ENCODE measurements at regions of chr20 and their contacts with region 1.

Region 1: DNA sequence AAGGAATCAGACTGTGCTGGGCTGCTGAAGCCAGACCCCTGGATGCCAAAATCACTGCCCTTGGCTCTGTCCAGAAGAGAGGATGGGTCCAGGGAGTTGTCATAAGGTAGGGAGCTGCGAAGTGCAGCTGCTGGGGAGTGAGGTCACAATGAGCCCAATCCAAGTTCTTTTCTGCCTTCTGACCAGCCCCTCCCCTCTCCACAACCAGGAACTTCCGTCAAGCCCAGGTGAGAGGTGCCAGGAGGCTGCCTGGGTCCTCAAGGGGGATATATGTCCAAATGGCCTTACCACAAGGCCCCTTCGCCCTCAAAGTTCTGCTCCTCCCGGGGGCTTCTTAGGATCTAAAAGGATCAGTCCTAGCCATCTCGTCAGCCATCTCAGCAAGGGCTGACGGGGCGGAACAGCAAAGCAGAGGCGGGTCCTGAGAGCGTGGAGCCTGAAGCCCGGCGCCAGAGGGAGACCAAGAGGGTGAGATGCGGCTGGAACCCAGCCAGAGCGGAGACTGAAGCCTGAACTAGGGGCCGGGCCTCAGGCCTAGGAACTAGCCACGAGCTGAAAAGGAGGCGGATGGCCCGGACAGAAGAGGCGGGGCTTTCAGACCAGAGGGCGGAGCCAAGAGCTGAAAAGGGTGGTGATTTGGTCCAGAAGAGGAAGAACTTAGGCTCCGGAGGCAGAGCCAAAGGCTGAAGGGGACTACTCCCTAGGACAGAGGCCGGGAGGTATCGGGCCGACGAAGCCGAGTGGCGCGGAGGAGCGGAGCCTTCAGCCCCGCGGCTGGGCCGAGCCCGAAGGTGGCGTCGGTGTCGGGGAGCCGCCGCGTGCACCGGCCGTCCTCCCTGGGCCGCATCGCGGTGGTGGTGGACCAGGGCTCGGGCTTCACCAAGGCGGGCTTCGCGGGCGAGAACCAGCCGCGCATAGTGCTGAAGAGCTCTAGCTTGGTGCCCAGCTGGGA is at the start of gene ACTL10:
- DNase-seq: peak; percentile 87
- H3K4me3 Mint-ChIP-seq: peak within 1 kb of the TSS; percentile 80
- H3K27ac Mint-ChIP-seq: peak within 1 kb of the TSS; percentile 94
- H3K4me1 Mint-ChIP-seq: peaks cover 31% of the 10 kb centered on the region
- H3K27me3 Mint-ChIP-seq: no peaks in the 10 kb centered on the region
- total RNA-seq, gene ACTL10: 0.96 to 1.0 TPM

Region 2: DNA sequence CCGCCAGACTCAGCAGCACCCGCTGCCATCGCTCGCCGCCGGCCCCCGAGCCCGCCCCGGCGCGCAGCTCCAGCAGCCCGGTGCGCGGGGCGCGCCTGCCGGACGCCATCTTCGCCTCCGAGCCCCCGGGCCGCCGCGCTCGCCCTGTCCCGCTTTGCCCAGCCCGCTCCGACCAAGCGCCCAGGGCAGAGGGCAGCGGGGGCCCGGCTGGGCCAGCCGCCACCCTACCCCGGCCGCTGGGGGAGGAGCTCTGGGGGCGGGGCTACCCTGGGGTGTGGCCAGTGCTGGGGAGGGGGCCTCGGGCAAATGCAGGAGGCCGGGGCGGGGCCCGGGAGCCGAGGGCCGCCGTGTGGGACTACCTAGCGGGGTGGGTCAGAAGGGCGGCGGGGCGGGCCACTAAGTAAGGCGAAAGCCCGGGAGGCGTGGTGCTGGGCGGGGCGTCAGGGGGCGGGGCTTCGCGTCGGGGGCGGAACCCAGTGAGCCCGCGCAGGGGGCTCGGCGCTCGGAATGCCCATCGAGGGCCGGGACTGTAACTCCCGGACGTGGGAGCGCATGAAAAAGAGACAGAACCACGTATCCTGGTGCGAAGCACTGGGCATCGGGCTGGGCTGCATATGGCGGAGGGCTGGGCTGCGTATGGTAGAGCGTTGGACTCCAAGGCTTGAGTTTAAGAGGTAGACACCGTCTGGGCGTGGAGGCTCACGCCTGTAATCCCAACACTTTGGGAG is 222.9 kb before region 1 on chr20 and contains the start of gene SNTA1:
- CTCF ChIA-PET with region 1: interaction called, 10 read pairs
- intact Hi-C with region 1: loop called (anchors 5 kb)
- DNase-seq: peak; percentile 88
- H3K4me3 Mint-ChIP-seq: peak within 1 kb of the TSS; percentile 84
- H3K27ac Mint-ChIP-seq: peak within 1 kb of the TSS; percentile 46
- H3K4me1 Mint-ChIP-seq: peaks cover 10% of the 10 kb centered on the region
- H3K27me3 Mint-ChIP-seq: no peaks in the 10 kb centered on the region
- total RNA-seq, gene SNTA1: 2.6 to 2.9 TPM

Region 3: GRCh38 chr20:33489495-33490022 is 177.0 kb before region 1 on chr20:
- CTCF ChIA-PET with region 1: interaction called, 8 read pairs
- intact Hi-C with region 1: loop called (anchors 1 kb)
- DNase-seq: peak; percentile 100
- H3K4me3 Mint-ChIP-seq: peak overlapping the region; percentile 79
- H3K27ac Mint-ChIP-seq: peak overlapping the region; percentile 81
- H3K4me1 Mint-ChIP-seq: peaks cover 17% of the 10 kb centered on the region
- H3K27me3 Mint-ChIP-seq: no peaks in the 10 kb centered on the region

Region 4: DNA sequence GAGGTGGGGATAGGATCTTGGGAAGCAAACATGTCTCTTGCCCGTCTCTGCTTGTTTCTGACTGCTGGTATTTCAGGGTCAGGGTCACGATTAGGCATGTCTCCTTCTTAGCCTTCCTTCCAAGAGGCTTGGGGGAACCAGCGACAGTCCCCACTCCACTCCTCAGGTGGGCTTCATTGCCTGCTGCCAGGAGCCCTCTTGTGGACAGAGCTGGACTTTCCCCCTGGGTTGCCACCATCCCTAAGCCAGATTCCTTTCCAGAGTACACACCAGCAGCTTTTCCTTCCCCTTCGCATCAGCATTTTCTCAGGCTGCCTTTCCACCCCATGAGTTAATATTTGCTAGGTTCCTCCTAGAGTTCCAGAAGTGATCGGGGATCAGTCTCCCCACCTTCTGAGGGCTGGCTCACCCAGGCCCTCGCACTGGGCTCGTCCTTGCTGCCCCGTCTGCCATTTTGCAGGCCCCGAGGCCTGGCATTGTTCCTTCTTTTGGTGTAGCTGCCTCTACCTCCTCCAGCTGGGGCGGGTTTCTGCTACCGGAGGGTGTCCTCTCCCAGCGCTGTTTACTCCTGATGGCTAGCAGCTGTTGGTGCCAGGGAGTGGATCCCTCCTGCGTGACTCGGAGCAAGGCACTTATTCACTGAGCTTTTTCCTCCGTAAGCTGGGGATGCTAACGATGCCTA is 13.2 kb before region 1 on chr20:
- CTCF ChIA-PET with region 1: interaction called, 15 read pairs
- intact Hi-C with region 1: loop called (anchors 1 kb)
- DNase-seq: peak; percentile 65
- H3K4me3 Mint-ChIP-seq: no peak overlapping the region
- H3K27ac Mint-ChIP-seq: peak overlapping the region; percentile 87
- H3K4me1 Mint-ChIP-seq: peaks cover 36% of the 10 kb centered on the region
- H3K27me3 Mint-ChIP-seq: no peaks in the 10 kb centered on the region

Region 5: GRCh38 chr20:33719989-33720709 is 53.6 kb after region 1 on chr20 and contains the start of gene PXMP4:
- CTCF ChIA-PET with region 1: interaction called, 4 read pairs
- intact Hi-C with region 1: loop called (anchors 2 kb)
- DNase-seq: peak; percentile 95
- H3K4me3 Mint-ChIP-seq: peak within 1 kb of the TSS; percentile 79
- H3K27ac Mint-ChIP-seq: peak within 1 kb of the TSS; percentile 76
- H3K4me1 Mint-ChIP-seq: peaks cover 21% of the 10 kb centered on the region
- H3K27me3 Mint-ChIP-seq: no peaks in the 10 kb centered on the region
- total RNA-seq, gene PXMP4: 9.5 to 10.3 TPM

Region 6: GRCh38 chr20:33773412-33774089 is 107.0 kb after region 1 on chr20:
- CTCF ChIA-PET with region 1: no interaction called
- intact Hi-C with region 1: no loop called
- DNase-seq: peak; percentile 54
- H3K4me3 Mint-ChIP-seq: no peak overlapping the region
- H3K27ac Mint-ChIP-seq: no peak overlapping the region
- H3K4me1 Mint-ChIP-seq: peaks cover 7% of the 10 kb centered on the region
- H3K27me3 Mint-ChIP-seq: no peaks in the 10 kb centered on the region

Region 7: GRCh38 chr20:33893314-33893713 is 226.7 kb after region 1 on chr20:
- CTCF ChIA-PET with region 1: no interaction called
- intact Hi-C with region 1: no loop called
- DNase-seq: no peak
- H3K4me3 Mint-ChIP-seq: no peak overlapping the region
- H3K27ac Mint-ChIP-seq: no peak overlapping the region
- H3K4me1 Mint-ChIP-seq: no peaks in the 10 kb centered on the region
- H3K27me3 Mint-ChIP-seq: no peaks in the 10 kb centered on the region

Region 8: DNA sequence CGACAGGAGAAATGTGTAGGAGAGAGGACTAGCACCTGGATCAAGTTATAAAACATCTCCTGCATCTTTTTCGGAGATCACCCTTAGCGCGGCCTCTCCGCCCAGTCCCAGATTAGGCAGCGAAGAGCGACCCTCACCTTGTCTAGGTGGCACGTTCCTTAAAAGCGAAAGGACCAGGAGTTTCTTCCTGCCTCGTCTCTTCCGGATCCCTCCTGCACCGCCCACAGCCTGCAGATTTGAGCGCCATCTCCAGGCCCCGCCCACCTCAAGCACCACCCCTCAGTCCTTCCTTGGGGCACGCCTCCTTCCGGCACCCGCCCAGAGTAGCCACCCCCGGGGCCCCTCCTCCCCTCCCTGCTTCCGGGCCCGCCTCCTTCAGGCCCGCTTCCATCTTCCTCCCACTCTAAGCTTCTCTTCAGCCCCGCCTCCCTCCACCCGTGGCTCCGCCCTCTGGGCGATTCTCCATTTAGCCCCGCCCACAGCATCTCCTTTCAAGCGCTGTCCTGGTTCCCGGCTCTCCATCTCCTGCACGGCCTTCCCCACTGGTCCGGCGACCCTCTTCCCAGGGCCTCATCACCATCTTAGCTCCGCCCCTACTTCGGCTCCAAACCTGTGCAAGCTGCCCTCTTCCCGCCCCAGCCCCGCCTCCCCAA is 326.5 kb after region 1 on chr20:
- CTCF ChIA-PET with region 1: no interaction called
- intact Hi-C with region 1: loop called (anchors 5 kb)
- DNase-seq: peak; percentile 100
- H3K4me3 Mint-ChIP-seq: peak overlapping the region; percentile 90
- H3K27ac Mint-ChIP-seq: peak overlapping the region; percentile 98
- H3K4me1 Mint-ChIP-seq: peaks cover 46% of the 10 kb centered on the region
- H3K27me3 Mint-ChIP-seq: no peaks in the 10 kb centered on the region

Measured in activated naive CD4-positive, alpha-beta T cell treated with anti-CD3 and anti-CD28 coated beads for 36 hours (primary cell).